ENCODE measurements at regions of chr19 and their contacts with region 1.

Region 1: GRCh38 chr19:18521885-18522624 is at the start of gene ELL:
- DNase-seq: peak; percentile 100
- H3K4me3 Mint-ChIP-seq: peak within 1 kb of the TSS; percentile 99
- H3K27ac Mint-ChIP-seq: peak within 1 kb of the TSS; percentile 93
- H3K4me1 Mint-ChIP-seq: peaks cover 12% of the 10 kb centered on the region
- H3K27me3 Mint-ChIP-seq: no peaks in the 10 kb centered on the region
- total RNA-seq, gene ELL: 23.6 and 24.1 TPM in 2 replicates

Region 2: DNA sequence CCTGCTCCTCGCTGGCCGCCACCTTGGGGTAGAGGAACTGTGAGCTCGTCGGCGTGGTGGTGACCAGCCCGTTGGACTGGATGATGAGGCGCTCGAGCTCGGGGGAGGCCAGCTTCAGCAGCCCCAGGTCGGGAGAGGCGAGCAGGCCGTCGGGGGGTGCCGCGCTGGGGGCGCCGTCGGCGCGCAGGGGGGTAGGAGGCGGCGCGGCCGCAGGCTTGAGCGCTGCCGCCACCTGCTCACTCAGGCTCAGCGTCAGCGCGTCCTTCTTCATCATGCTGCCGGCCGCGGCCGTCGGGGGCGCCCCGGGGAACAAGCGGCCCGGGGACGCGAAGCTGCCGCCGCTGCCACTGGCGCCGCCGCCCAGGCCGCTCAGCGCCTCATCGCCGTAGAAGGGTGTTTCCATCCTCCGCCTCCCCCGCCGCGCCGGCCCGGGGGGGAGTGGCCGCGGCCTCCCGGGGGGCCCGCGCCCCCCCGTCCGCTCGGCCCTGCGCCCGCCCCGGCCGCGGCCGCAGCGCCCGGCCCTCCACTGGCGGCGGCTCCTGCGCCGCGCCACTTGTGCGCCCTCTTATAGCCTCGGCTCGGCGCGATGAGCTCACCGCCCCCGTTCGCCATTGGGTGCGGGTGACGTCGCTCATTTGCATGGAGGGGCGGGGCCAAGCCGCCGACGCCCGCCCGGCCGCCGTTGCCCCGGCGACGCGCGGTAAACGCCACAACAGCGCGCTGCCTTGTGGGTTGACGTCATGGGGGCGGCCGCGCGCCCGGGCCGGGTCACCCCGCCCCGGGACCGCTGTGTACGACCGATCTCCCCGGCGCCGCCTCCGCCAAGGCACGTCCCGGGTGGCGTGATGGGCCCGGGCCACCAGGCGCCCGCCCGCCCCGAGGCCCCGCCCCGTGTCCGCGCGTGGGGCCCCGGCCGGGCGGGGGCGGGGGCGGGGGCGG is 240.7 kb before region 1 on chr19 and contains the start of gene JUND:
- intact Hi-C with region 1: loop called (anchors 1 kb)
- DNase-seq: peak; percentile 98
- H3K4me3 Mint-ChIP-seq: peak within 1 kb of the TSS; percentile 88
- H3K27ac Mint-ChIP-seq: peak within 1 kb of the TSS; percentile 98
- H3K4me1 Mint-ChIP-seq: peaks cover 49% of the 10 kb centered on the region
- H3K27me3 Mint-ChIP-seq: no peaks in the 10 kb centered on the region
- total RNA-seq, gene JUND: 431 and 455 TPM in 2 replicates

Region 3: GRCh38 chr19:18469069-18469846 is 52.8 kb before region 1 on chr19:
- intact Hi-C with region 1: loop called (anchors 1 kb)
- DNase-seq: peak; percentile 43
- H3K4me3 Mint-ChIP-seq: no peak overlapping the region
- H3K27ac Mint-ChIP-seq: no peak overlapping the region
- H3K4me1 Mint-ChIP-seq: peaks cover 15% of the 10 kb centered on the region
- H3K27me3 Mint-ChIP-seq: no peaks in the 10 kb centered on the region

Region 4: GRCh38 chr19:18542936-18543815 is 21.1 kb after region 1 on chr19 and contains the start of gene FKBP8:
- intact Hi-C with region 1: loop called (anchors 1 kb)
- DNase-seq: peak; percentile 92
- H3K4me3 Mint-ChIP-seq: peak within 1 kb of the TSS; percentile 92
- H3K27ac Mint-ChIP-seq: peak within 1 kb of the TSS; percentile 99
- H3K4me1 Mint-ChIP-seq: peaks cover 27% of the 10 kb centered on the region
- H3K27me3 Mint-ChIP-seq: peaks cover 4% of the 10 kb centered on the region
- total RNA-seq, gene FKBP8: 163 and 167 TPM in 2 replicates

Region 5: DNA sequence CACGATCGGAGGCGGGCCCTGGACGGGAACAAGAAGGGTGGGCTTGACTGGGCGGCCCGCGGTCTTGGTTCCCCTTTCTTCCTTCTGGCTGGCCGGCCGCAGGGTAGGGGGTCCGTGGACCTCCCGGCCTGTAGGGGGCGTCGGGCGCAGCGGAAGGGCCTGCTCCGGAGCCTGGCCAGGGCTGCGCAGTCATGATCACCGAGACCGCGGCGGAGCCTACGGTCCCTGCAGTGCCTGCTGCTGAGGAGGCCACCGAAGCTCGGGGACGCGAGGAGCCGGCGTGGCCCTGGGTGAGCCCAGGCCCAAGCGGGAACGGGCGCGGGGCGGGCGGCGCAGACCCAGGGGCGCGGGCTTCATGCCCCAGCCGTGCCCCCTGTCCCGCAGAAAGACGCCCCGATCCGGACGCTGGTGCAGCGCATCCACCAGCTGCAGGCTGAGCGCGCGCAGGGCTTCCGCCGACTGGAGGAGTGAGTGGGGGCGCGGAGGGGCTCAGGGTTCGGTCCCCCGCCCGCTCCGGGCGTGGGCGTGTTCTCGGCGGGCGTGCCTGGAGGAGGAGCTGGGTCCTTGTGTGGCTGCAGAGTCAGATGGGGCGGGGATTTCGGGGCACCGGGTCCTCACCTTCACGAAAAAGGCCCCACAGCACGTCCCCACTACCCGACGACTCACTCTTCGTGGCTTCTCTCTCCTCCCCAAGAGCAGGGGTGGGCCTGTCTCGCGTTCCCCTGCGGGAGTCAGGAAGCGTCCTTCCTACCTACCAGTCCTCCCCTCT is 66.7 kb after region 1 on chr19 and contains the start of gene REX1BD:
- intact Hi-C with region 1: loop called (anchors 1 kb)
- DNase-seq: peak; percentile 86
- H3K4me3 Mint-ChIP-seq: peak within 1 kb of the TSS; percentile 90
- H3K27ac Mint-ChIP-seq: peak within 1 kb of the TSS; percentile 91
- H3K4me1 Mint-ChIP-seq: peaks cover 43% of the 10 kb centered on the region
- H3K27me3 Mint-ChIP-seq: no peaks in the 10 kb centered on the region
- total RNA-seq, gene REX1BD: 134 and 135 TPM in 2 replicates

Region 6: DNA sequence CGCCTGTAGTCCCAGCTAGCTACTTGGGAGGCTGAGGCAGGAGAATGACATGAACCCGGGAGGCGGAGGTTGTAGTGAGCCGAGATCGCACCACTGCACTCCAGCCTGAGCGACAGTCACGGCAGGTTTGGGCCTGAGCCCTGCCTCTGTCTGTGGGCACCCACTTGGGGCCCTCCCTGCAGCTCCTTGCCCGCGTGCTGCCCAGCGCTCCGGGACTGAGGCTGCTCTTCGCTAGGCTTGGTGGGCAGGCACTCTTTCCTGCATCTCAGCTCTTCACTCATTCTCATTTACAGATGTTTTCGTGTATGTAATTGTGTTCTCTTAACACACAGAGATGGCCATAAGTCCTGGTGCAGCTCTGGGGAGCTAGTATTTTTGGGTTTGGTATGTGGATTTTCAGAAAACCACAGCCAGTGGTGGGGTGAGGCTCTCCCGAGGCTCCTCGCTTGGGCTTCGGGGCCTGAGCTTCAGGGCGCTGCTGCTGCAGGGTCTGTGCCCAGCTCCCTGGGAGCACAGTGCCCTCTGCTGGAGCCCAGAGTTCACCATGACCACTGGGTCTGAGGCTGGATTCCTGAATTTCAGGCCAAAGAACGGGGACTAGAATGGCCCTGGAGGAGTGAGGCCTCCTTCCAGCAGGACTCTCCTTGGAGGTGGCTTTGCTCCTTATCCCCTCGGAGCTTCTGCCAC is 324.9 kb after region 1 on chr19:
- intact Hi-C with region 1: loop called (anchors 2 kb)
- DNase-seq: peak; percentile 51
- H3K4me3 Mint-ChIP-seq: no peak overlapping the region
- H3K27ac Mint-ChIP-seq: no peak overlapping the region
- H3K4me1 Mint-ChIP-seq: peaks cover 55% of the 10 kb centered on the region
- H3K27me3 Mint-ChIP-seq: no peaks in the 10 kb centered on the region

Region 7: GRCh38 chr19:19192078-19192882 is 670.2 kb after region 1 on chr19 and contains the starts of genes BORCS8 and RFXANK:
- intact Hi-C with region 1: loop called (anchors 1 kb)
- DNase-seq: peak; percentile 99
- H3K4me3 Mint-ChIP-seq: peak within 1 kb of the TSS; percentile 96
- H3K27ac Mint-ChIP-seq: peak within 1 kb of the TSS; percentile 99
- H3K4me1 Mint-ChIP-seq: peaks cover 20% of the 10 kb centered on the region
- H3K27me3 Mint-ChIP-seq: no peaks in the 10 kb centered on the region
- total RNA-seq, gene BORCS8: 37.8 and 38.6 TPM in 2 replicates
- total RNA-seq, gene RFXANK: 101 and 103 TPM in 2 replicates